Naive thymus-derived CD4-positive, alpha-beta T cell (primary cell): ENCODE measurements at regions of chr18 and their contacts with region 1.

Region 1: DNA sequence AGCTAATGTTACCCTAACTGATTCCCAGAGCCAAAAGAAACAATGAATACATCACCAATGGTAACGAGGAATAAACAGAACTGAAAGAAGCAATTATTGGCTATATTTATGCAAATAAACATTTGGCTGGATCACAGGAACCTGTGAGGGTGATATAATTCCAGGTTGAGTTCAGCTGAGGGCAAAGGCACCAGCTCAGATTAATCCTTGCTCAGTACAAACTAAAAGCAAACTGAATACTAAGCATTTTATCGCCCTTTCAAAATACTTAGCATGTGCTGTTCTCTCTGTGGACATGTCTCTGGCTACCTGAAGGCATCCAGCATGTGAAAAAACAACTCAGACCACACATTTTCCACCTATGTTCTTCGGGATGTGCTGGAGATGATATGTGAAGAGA is 791.7 kb downstream of the METTL4 start:
- DNase-seq: no peak
- ATAC-seq: no peak
- H3K4me3 ChIP-seq: no peak overlapping the region
- H3K4me3 Mint-ChIP-seq: no peak overlapping the region
- H3K27ac ChIP-seq: no peak overlapping the region
- H3K27ac Mint-ChIP-seq: no peak overlapping the region
- H3K4me1 ChIP-seq: no peaks in the 10 kb centered on the region
- H3K4me1 Mint-ChIP-seq: no peaks in the 10 kb centered on the region
- H3K27me3 ChIP-seq: no peaks in the 10 kb centered on the region
- H3K27me3 Mint-ChIP-seq: no peaks in the 10 kb centered on the region

Region 2: DNA sequence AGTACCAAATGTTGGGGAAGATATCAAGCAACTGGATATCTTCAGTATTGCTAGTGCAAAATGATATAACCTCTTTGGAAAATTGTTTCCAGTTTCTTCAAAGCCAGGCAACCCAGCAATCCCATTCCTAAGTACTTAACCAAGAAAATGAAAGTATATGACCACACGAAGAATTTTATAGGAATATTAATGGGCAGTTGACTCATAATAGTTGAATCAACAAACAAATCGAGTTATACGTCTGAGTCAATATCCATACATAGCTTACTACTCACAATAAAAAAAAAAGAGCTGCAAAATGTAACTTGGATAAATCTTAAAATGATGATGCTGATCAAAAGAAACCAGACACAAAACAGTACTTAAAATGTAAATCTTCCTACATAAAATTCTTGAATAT is 18.7 kb before region 1 on chr18:
- CTCF ChIA-PET with region 1: no interaction called
- POLR2A ChIA-PET with region 1: no interaction called
- intact Hi-C with region 1: loop called in 1 of 2 experiments (anchors 1 kb)
- DNase-seq: no peak
- ATAC-seq: no peak
- H3K4me3 ChIP-seq: no peak overlapping the region
- H3K4me3 Mint-ChIP-seq: no peak overlapping the region
- H3K27ac ChIP-seq: no peak overlapping the region
- H3K27ac Mint-ChIP-seq: no peak overlapping the region
- H3K4me1 ChIP-seq: no peaks in the 10 kb centered on the region
- H3K4me1 Mint-ChIP-seq: no peaks in the 10 kb centered on the region
- H3K27me3 ChIP-seq: no peaks in the 10 kb centered on the region
- H3K27me3 Mint-ChIP-seq: no peaks in the 10 kb centered on the region

Region 3: DNA sequence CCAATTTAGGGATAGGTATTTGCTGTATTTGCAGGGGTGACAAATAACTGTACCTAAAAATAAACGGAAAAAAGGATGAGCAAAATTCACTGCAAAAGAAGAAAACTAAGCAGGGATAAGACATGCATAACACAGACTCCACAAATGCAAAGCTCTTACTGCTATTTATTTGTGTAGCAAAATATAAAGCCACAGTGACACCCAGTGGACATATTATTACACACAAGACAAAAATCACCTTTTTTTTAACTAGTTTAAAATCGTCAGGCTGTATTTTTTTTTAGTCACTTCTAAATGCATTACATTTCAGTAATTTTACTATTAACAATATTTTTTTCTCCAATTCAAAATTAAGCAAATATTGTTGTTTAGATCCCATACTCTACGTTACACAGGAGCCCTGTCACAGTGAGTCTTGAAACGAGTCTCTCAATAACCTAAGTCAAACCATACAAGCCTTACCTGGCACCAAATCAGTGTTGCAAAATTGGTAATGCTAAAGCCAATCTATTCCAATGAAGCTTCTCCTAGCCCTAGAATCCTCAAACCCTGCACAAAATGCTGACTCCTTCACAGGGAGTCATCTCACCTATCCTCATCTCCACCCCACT is 768.0 kb after region 1 on chr18:
- CTCF ChIA-PET with region 1: no interaction called
- POLR2A ChIA-PET with region 1: no interaction called
- intact Hi-C with region 1: no loop called
- DNase-seq: peak in 7 of 9 donors; percentile 13 to 50 (median 37)
- ATAC-seq: peak; percentile 72
- H3K4me3 ChIP-seq: no peak overlapping the region
- H3K4me3 Mint-ChIP-seq: no peak overlapping the region
- H3K27ac ChIP-seq: no peak overlapping the region
- H3K27ac Mint-ChIP-seq: peak overlapping the region in 3 of 9 donors; percentile 0 to 10 (median 6)
- H3K4me1 ChIP-seq: no peaks in the 10 kb centered on the region
- H3K4me1 Mint-ChIP-seq: peaks cover 3 to 33% (median 23%) of the 10 kb centered on the region in 7 donors
- H3K27me3 ChIP-seq: no peaks in the 10 kb centered on the region
- H3K27me3 Mint-ChIP-seq: no peaks in the 10 kb centered on the region